ENCODE measurements at regions of chr7 and their contacts with region 1.

Region 1: DNA sequence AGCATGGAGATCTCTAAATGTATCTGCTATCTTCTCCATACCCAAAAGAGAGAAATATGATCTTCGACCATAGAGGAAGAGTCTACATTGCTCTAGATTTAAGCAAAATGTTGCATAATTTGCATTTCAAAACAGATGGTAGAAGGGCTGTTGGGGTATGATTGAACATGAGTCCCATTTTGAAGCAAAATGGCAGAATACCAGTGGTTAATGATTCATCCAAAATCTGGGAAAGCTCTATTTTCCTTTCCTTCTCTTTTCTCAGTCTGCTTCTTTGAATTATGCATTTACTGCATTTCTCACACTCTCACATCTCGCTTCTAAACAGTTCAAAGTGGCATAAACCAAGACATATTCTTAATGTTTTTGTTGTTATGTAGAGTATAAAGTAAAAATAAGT is 178.5 kb downstream of the MACC1 start:
- DNase-seq: no peak
- ATAC-seq: no peak
- H3K4me3 ChIP-seq: no peak overlapping the region
- H3K27ac ChIP-seq: no peak overlapping the region
- H3K4me1 ChIP-seq: no peaks in the 10 kb centered on the region
- H3K27me3 ChIP-seq: no peaks in the 10 kb centered on the region
- CTCF ChIP-seq: no peak
- POLR2A ChIP-seq: no peak
- RAD21 ChIP-seq: no peak

Region 2: DNA sequence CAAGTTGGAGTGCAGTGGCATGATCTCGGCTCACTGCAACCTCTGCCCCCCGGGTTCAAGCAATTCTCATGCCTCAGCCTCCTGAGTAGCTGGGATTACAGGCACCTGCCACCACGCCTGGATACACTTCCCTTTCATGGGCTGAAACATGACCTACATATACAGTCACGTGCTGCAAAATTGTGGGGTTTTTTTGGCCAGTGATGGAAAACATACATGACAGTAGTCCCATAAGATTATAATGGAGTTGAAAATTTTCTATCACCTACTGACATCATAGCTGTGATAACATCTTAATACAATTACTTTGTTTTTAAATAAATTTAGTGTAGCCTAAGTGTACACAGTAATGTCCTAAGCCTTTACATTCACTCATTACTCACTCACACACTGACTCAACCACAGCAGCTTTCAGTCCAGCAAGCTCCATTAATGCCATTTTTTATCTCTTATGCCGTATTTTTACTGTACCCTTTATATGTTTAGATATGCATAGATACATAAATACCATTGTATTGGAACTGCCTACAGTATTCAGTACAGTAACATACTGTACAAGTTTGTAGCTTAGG is 185.3 kb before region 1 on chr7:
- CTCF ChIA-PET with region 1: no interaction called
- POLR2A ChIA-PET with region 1: no interaction called
- dilution Hi-C with region 1: no loop called
- in situ Hi-C with region 1: no loop called
- intact Hi-C with region 1: no loop called
- DNase-seq: no peak
- ATAC-seq: no peak
- H3K4me3 ChIP-seq: no peak overlapping the region
- H3K27ac ChIP-seq: no peak overlapping the region
- H3K4me1 ChIP-seq: no peaks in the 10 kb centered on the region
- H3K27me3 ChIP-seq: no peaks in the 10 kb centered on the region
- CTCF ChIP-seq: no peak
- POLR2A ChIP-seq: no peak
- RAD21 ChIP-seq: no peak

Region 3: GRCh38 chr7:19991936-19992335 is 46.7 kb before region 1 on chr7:
- CTCF ChIA-PET with region 1: no interaction called
- POLR2A ChIA-PET with region 1: no interaction called
- dilution Hi-C with region 1: no loop called
- in situ Hi-C with region 1: no loop called
- intact Hi-C with region 1: no loop called
- DNase-seq: no peak
- ATAC-seq: peak; percentile 24; the same call in 1 of the 2 replicates
- H3K4me3 ChIP-seq: no peak overlapping the region
- H3K27ac ChIP-seq: no peak overlapping the region
- H3K4me1 ChIP-seq: no peaks in the 10 kb centered on the region
- H3K27me3 ChIP-seq: no peaks in the 10 kb centered on the region
- CTCF ChIP-seq: no peak
- POLR2A ChIP-seq: no peak
- RAD21 ChIP-seq: no peak

Region 4: GRCh38 chr7:20089490-20089889 is 50.8 kb after region 1 on chr7:
- CTCF ChIA-PET with region 1: no interaction called
- POLR2A ChIA-PET with region 1: no interaction called
- dilution Hi-C with region 1: no loop called
- in situ Hi-C with region 1: no loop called
- intact Hi-C with region 1: loop called (anchors 1 kb)
- DNase-seq: no peak
- ATAC-seq: no peak
- H3K4me3 ChIP-seq: no peak overlapping the region
- H3K27ac ChIP-seq: no peak overlapping the region
- H3K4me1 ChIP-seq: no peaks in the 10 kb centered on the region
- H3K27me3 ChIP-seq: no peaks in the 10 kb centered on the region
- CTCF ChIP-seq: no peak
- POLR2A ChIP-seq: no peak
- RAD21 ChIP-seq: no peak

Measured in IMR-90 (cell line).